A673 (cell line): ENCODE measurements at regions of chr10 and their contacts with region 1.

Region 1: DNA sequence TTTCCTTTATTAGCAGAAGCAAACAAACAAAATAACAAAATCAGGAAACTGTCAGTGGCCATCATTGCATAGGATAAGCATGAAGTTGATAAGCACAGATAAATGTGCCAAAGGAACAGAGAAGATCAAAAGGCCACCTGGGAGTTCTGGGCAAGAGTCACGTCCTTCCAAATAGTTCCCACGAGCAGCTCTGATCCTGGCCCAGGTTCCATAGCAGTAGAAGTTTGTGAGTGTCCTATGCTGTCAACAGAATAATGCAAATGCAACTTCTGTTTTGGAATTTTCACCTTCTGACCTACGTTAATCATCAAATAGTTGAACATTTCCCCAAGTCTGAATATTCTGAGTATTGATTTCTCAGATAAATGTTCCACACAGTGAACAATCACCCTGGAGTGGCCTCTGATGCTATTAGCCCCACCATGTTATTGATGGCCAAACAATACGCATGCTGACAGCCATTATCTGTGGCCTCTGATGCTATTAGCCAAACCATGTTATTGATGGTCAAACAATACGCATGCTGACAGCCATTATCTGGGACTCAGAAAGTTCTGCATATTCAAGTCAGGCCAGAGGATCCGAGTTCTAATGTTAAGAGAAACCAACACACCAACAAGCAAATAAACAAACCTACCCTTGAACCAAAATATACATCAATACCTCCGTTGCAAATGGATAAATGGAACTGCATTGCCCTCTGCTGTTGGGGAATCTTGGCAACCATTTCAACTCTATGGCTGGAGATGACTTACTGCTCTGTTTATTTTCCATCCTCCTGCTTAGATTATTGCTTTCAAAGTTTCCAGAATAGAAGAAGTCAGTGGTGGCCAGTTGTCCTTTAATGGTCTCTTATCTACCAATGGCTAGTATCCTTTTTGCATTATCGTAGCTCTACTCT is 63.3 kb downstream of the MRC1 start:
- DNase-seq: peak; percentile 59
- H3K4me3 ChIP-seq: no peak overlapping the region
- H3K27ac ChIP-seq: no peak overlapping the region
- H3K4me1 ChIP-seq: no peaks in the 10 kb centered on the region
- H3K27me3 ChIP-seq: no peaks in the 10 kb centered on the region
- CTCF ChIP-seq: peak; percentile 72

Region 2: DNA sequence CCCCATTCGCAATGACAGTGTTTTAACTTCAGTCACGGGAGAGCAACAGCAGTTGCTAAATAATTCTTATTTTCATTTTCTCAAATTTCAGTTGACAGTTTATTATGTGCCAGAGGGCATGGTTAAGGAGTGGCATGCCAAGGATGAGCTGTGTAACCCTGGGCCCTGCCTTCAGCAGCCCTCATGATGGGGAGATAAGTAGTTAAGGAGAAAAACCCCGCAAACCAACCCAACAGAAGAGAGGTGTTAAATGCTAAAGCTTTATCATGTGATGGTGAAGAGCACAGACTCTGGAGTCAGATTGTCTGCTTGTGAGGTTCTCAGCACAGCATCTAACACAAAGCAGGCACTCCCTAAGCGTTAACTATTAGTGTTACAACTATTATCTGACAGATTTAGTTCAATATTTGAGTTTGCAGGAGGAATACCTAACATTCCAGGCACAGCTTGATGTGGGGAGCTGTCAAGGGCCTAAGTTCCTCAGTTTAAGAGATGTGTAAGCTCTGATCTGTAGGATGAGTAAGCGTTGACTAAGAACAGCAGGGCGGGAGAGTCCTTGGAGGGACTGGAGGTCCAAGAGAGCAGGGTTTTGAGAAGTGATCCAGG is 198.9 kb before region 1 on chr10:
- CTCF ChIA-PET with region 1: no interaction called
- POLR2A ChIA-PET with region 1: no interaction called
- intact Hi-C with region 1: no loop called
- DNase-seq: peak; percentile 88
- H3K4me3 ChIP-seq: no peak overlapping the region
- H3K27ac ChIP-seq: peak overlapping the region; percentile 47
- H3K4me1 ChIP-seq: peaks cover 33% of the 10 kb centered on the region
- H3K27me3 ChIP-seq: no peaks in the 10 kb centered on the region
- CTCF ChIP-seq: no peak

Region 3: DNA sequence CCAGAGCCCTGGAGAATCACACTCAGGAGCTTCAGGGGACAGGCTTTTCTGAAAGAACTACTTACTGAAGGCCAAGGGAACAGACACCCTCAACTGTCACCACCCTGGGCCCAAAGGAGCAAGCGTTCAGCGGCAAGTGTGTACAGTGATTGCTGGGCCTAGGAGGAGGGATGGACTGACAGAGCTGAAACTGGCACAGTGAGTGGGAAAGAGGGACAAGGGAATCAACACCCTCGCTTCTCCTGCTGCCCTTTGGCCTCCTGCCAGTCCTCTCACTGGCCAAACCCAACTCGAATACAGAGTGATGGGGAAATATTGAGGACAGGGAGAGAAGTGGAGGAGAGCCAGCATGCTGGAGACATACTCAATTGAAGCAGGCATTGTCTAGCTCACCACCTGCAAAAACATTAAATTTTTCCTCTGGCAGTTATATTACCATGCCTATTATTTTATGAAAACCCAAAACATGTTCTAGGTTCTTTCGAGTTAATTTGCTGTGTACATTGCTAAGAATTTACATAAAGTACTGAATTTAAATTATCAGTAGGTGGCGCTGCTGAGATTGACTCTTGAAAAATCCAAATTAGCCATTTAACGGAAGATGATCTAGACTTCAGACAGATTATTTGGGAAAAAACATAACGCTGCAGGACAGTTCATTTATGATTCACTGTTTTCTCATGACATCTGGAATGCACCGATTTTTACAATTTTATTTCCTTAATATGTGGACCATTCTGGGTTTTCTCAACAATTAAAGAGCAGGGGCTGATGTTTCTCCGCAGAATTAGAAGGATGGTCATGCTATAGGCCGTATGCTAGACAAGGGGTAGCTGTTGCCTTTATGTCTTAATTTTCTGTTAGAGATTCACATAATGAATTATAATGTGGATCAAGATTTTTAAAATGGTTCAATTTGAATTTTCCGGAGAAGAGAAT is 135.1 kb before region 1 on chr10:
- CTCF ChIA-PET with region 1: no interaction called
- POLR2A ChIA-PET with region 1: no interaction called
- intact Hi-C with region 1: loop called (anchors 2 kb)
- DNase-seq: peak; percentile 64
- H3K4me3 ChIP-seq: no peak overlapping the region
- H3K27ac ChIP-seq: no peak overlapping the region
- H3K4me1 ChIP-seq: no peaks in the 10 kb centered on the region
- H3K27me3 ChIP-seq: no peaks in the 10 kb centered on the region
- CTCF ChIP-seq: peak; percentile 77

Region 4: DNA sequence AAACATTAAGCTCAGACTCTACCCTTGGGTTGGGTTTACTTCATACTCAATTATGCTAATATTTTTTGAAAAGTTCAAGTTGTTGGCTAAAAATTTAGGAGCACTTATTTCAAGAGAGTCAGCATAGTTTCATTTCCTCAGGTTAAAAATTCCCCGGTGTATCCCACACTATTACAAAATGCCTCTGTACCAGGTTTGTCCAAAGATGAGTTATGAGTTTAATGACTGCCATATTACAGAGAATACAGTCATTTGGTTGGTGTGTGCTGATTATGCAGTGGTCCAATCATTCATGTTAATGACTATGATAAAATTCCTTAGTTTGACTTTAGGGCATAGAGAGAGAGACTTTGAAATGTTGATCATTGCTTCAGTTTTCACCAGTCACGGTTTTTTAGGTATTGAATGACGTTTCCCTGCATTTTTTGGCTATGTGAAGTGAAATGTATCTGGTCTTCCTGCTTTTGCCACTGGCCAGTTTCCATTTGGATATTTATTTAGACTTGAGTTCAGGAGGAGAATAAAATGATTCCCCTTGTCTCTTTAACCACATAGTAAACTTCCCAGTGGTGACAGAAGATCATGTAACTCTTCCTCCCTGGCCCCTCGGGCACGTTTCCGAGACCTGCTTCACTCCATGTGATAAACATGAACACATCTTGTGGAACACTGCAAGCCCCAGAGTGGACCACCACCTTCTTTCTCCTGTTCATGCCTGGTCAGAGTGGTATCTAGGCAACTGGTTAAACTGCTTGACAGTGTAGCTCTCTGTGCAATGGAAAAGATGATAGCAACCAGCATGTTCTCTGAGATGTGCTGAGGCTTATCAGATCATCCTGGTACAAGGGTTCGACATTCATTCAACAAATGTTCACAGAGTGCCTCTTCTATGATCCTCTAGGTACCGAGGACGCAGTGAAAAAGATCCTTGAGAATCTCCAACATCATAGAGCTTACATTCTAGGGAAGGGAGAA is 421.4 kb after region 1 on chr10:
- CTCF ChIA-PET with region 1: no interaction called
- POLR2A ChIA-PET with region 1: no interaction called
- intact Hi-C with region 1: no loop called
- DNase-seq: no peak
- H3K4me3 ChIP-seq: no peak overlapping the region
- H3K27ac ChIP-seq: no peak overlapping the region
- H3K4me1 ChIP-seq: no peaks in the 10 kb centered on the region
- H3K27me3 ChIP-seq: no peaks in the 10 kb centered on the region
- CTCF ChIP-seq: no peak

Region 5: GRCh38 chr10:18523025-18523424 is 650.6 kb after region 1 on chr10:
- CTCF ChIA-PET with region 1: no interaction called
- POLR2A ChIA-PET with region 1: no interaction called
- intact Hi-C with region 1: no loop called
- DNase-seq: no peak
- H3K4me3 ChIP-seq: no peak overlapping the region
- H3K27ac ChIP-seq: no peak overlapping the region
- H3K4me1 ChIP-seq: no peaks in the 10 kb centered on the region
- H3K27me3 ChIP-seq: no peaks in the 10 kb centered on the region
- CTCF ChIP-seq: no peak